HCT116 (cell line): ENCODE measurements at regions of chr10 and their contacts with region 1.

Region 1: DNA sequence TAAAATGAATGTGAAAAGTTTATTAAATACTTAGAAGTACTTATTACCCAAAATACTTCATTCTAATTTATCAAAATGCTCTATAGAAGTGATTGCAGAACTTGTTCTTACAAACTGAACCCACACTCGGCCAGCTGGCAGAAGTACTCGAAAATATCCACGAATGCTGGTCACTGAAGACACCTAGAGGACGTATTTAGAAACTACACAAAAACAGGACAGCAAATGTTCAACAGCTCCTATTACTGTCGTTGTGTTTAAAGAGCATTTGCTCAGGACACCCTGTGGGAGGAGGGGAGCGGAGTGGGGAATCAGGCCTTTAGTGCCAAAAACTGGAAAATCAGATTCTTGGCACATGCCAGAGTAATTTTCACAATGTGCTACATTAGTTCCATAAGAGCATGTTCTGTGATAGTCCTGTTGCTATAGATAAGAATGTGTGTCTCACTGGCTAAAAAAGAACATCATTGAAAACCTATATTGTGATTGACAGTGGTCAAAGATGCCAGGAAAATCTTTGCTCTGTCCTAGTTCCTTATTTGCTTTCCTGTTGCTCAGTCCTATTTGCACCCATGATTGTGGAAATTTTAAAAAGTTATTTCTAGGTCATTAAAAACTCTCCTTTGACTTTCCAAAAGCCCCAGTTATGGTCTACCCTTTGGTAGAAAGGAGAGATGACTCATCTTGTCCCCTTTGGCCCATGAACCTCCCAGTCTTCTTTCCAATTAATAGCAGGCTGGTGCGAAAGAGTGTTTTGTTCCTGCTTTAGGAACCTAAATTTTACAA is 49.0 kb upstream of the NRBF2 start:
- DNase-seq: peak; percentile 71
- ATAC-seq: peak; percentile 94
- H3K4me3 ChIP-seq: no peak overlapping the region
- H3K27ac ChIP-seq: no peak overlapping the region
- H3K4me1 ChIP-seq: no peaks in the 10 kb centered on the region; a peak in 1 of 4 replicates
- H3K27me3 ChIP-seq: no peaks in the 10 kb centered on the region
- CTCF ChIP-seq: peak; percentile 48 to 75 (median 75)
- POLR2A ChIP-seq: no peak
- RAD21 ChIP-seq: peak; percentile 91

Region 2: GRCh38 chr10:62437696-62438095 is 646.4 kb before region 1 on chr10:
- CTCF ChIA-PET with region 1: no interaction called
- POLR2A ChIA-PET with region 1: no interaction called
- RAD21 ChIA-PET with region 1: no interaction called
- intact Hi-C with region 1: loop called (anchors 2 kb)
- DNase-seq: peak; percentile 53
- ATAC-seq: peak; percentile 75
- H3K4me3 ChIP-seq: no peak overlapping the region
- H3K27ac ChIP-seq: no peak overlapping the region
- H3K4me1 ChIP-seq: peaks cover 8 to 13% of the 10 kb centered on the region in 2 experiments; a peak in 3 of 4 replicates
- H3K27me3 ChIP-seq: peaks cover 10% of the 10 kb centered on the region; the same call in 1 of the 2 replicates
- CTCF ChIP-seq: peak; percentile 57 to 90 (median 58)
- POLR2A ChIP-seq: no peak
- RAD21 ChIP-seq: peak; percentile 78

Region 3: GRCh38 chr10:62492012-62492869 is 591.9 kb before region 1 on chr10:
- CTCF ChIA-PET with region 1: interaction called, 5 read pairs
- POLR2A ChIA-PET with region 1: no interaction called
- RAD21 ChIA-PET with region 1: no interaction called
- intact Hi-C with region 1: loop called (anchors 2 kb)
- DNase-seq: peak; percentile 48
- ATAC-seq: peak; percentile 77
- H3K4me3 ChIP-seq: no peak overlapping the region
- H3K27ac ChIP-seq: no peak overlapping the region
- H3K4me1 ChIP-seq: no peaks in the 10 kb centered on the region
- H3K27me3 ChIP-seq: no peaks in the 10 kb centered on the region
- CTCF ChIP-seq: peak; percentile 40 to 69 (median 63); a peak in 5 of 6 replicates
- POLR2A ChIP-seq: no peak
- RAD21 ChIP-seq: peak; percentile 66

Region 4: GRCh38 chr10:62594093-62594520 is 490.0 kb before region 1 on chr10:
- CTCF ChIA-PET with region 1: interaction called, 5 read pairs
- POLR2A ChIA-PET with region 1: no interaction called
- RAD21 ChIA-PET with region 1: no interaction called
- intact Hi-C with region 1: loop called (anchors 5 kb)
- DNase-seq: peak; percentile 53
- ATAC-seq: peak; percentile 97
- H3K4me3 ChIP-seq: no peak overlapping the region
- H3K27ac ChIP-seq: no peak overlapping the region
- H3K4me1 ChIP-seq: no peaks in the 10 kb centered on the region
- H3K27me3 ChIP-seq: no peaks in the 10 kb centered on the region
- CTCF ChIP-seq: peak; percentile 87 to 96 (median 89)
- POLR2A ChIP-seq: no peak
- RAD21 ChIP-seq: peak; percentile 92

Region 5: DNA sequence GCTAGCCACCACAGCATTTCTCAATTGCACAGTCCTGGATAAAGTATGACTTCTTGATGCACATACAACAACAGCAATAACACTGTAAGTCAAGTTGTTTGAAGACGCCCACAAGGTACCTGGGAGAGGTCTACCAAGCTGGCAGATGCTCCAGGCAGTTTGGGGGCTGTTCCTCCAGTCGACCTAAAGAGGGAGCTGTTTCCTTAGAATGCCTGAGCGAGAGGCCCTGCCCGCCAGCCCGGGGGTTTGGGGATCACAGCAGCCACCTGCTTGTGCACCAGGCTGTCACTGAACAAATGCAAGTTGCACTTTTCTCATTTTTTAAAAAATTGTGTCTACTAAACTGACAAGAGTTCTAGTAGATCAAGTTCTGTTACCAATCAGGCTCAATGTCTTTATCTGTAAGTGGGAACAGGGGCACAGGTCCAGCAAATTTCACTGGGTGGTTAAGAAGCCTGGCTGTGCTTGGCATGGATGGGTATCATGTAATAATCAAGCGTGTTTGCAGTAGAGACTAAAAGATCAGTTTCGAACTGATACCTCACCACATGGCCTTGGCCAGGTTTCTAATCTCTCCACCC is 473.4 kb before region 1 on chr10:
- CTCF ChIA-PET with region 1: interaction called, 11 read pairs
- POLR2A ChIA-PET with region 1: no interaction called
- RAD21 ChIA-PET with region 1: no interaction called
- intact Hi-C with region 1: loop called (anchors 1 kb)
- DNase-seq: peak; percentile 60
- ATAC-seq: peak; percentile 98
- H3K4me3 ChIP-seq: no peak overlapping the region
- H3K27ac ChIP-seq: no peak overlapping the region
- H3K4me1 ChIP-seq: peaks cover 0 to 14% of the 10 kb centered on the region in 2 experiments; a peak in 2 of 4 replicates
- H3K27me3 ChIP-seq: no peaks in the 10 kb centered on the region
- CTCF ChIP-seq: peak; percentile 84 to 99 (median 97)
- POLR2A ChIP-seq: no peak
- RAD21 ChIP-seq: peak; percentile 96

Region 6: DNA sequence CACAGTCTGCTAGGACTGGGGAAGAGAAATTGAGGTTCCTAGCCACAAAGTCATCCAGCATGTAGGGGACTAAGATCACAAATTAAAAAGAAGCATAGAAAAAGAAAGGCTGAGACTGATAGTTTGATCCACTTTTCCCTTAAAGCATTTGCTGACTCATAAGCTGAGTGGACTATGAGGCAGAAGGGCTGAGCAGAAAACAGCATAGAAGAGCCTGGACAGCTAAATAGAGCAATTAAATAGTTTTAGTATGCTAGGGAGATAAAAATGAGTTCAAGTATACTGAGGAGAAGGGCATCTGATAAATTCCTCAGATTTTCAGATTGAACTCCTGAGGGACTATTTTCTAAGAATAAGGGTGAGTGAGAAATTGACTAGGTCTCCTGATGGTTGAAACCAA is 112.0 kb before region 1 on chr10:
- CTCF ChIA-PET with region 1: no interaction called
- POLR2A ChIA-PET with region 1: no interaction called
- RAD21 ChIA-PET with region 1: no interaction called
- intact Hi-C with region 1: no loop called
- DNase-seq: no peak
- ATAC-seq: no peak
- H3K4me3 ChIP-seq: no peak overlapping the region
- H3K27ac ChIP-seq: no peak overlapping the region
- H3K4me1 ChIP-seq: no peaks in the 10 kb centered on the region
- H3K27me3 ChIP-seq: no peaks in the 10 kb centered on the region
- CTCF ChIP-seq: no peak
- POLR2A ChIP-seq: no peak
- RAD21 ChIP-seq: no peak

Region 7: GRCh38 chr10:62992145-62992721 is 91.9 kb before region 1 on chr10:
- CTCF ChIA-PET with region 1: no interaction called
- POLR2A ChIA-PET with region 1: no interaction called
- RAD21 ChIA-PET with region 1: no interaction called
- intact Hi-C with region 1: no loop called
- DNase-seq: no peak
- ATAC-seq: no peak
- H3K4me3 ChIP-seq: no peak overlapping the region
- H3K27ac ChIP-seq: no peak overlapping the region
- H3K4me1 ChIP-seq: 0 out of 4 replicates have a peak, but pooled peaks cover 0 to 4% of the 10 kb centered on the region in 2 experiments
- H3K27me3 ChIP-seq: no peaks in the 10 kb centered on the region
- CTCF ChIP-seq: no peak
- POLR2A ChIP-seq: no peak
- RAD21 ChIP-seq: no peak

Region 8: GRCh38 chr10:63094405-63094804 is 10.3 kb after region 1 on chr10:
- CTCF ChIA-PET with region 1: no interaction called
- POLR2A ChIA-PET with region 1: no interaction called
- RAD21 ChIA-PET with region 1: no interaction called
- intact Hi-C with region 1: no loop called
- DNase-seq: no peak
- ATAC-seq: no peak
- H3K4me3 ChIP-seq: no peak overlapping the region
- H3K27ac ChIP-seq: no peak overlapping the region
- H3K4me1 ChIP-seq: no peaks in the 10 kb centered on the region
- H3K27me3 ChIP-seq: no peaks in the 10 kb centered on the region
- CTCF ChIP-seq: no peak
- POLR2A ChIP-seq: no peak
- RAD21 ChIP-seq: no peak